Heart left ventricle (tissue), 16 donors: ENCODE measurements at regions of chr16 and their contacts with region 1.

Region 1: DNA sequence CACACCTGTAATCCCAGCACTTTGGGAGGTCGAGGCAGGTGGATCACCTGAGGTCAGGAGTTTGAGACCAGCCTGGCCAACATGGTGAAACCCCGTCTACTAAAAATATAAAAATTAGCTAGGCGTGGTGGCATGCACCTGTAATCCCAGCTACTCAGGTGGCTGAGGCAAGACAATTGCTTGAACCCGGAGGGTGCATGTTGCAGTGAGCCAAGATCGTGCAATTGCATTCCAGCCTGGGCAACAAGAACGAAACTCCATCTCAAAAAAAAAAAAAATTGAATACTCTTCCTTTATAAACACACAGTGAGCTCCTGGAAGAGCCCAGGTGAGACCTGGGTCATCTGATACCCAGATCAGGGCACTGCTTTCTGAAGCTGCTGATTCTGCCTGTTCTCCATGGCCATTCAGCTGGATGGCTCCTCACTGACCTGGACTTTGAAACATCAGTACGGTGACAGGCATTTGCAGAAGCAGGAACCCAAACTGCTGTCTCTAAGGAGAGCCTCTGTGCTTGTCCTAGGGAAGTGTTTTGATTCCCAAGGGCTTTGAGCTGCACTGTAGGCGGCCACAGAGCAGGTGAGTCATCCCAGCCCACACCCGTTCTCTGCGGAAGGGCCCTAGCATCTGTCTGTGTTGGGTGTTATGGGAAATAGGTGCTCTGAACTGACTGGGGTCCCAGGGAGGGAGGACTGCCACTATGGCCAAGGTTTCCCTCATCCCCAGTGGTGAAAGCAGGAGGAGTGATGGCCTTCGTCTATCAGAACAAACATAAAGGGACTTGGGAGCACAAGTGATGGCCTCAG is 60.6 kb upstream of the ADCY9 start:
- DNase-seq: no peak
- ATAC-seq: no peak
- H3K4me3 ChIP-seq: no peak overlapping the region
- H3K27ac ChIP-seq: no peak overlapping the region
- H3K4me1 ChIP-seq: no peaks in the 10 kb centered on the region
- H3K27me3 ChIP-seq: peaks cover 0 to 4% (median 0%) of the 10 kb centered on the region in 9 donors
- CTCF ChIP-seq: no peak
- POLR2A ChIP-seq: no peak

Region 2: GRCh38 chr16:3945751-3946603 is 230.8 kb before region 1 on chr16:
- intact Hi-C with region 1: loop called in 1 of 10 experiments (anchors 10 kb)
- DNase-seq: peak in 2 of 5 donors; percentile 54 to 64
- ATAC-seq: no peak
- H3K4me3 ChIP-seq: no peak overlapping the region
- H3K27ac ChIP-seq: peak overlapping the region in 2 of 12 donors; percentile 12 to 36
- H3K4me1 ChIP-seq: peaks cover 4 to 34% (median 23%) of the 10 kb centered on the region in 12 donors
- H3K27me3 ChIP-seq: no peaks in the 10 kb centered on the region
- CTCF ChIP-seq: no peak
- POLR2A ChIP-seq: no peak

Region 3: GRCh38 chr16:4067262-4068001 is 109.4 kb before region 1 on chr16:
- intact Hi-C with region 1: no loop called
- DNase-seq: no peak
- ATAC-seq: peak in 3 of 4 donors; percentile 22 to 57 (median 24)
- H3K4me3 ChIP-seq: no peak overlapping the region
- H3K27ac ChIP-seq: no peak overlapping the region
- H3K4me1 ChIP-seq: peaks cover 0 to 11% (median 1%) of the 10 kb centered on the region in 12 donors
- H3K27me3 ChIP-seq: no peaks in the 10 kb centered on the region
- CTCF ChIP-seq: no peak
- POLR2A ChIP-seq: no peak

Region 4: GRCh38 chr16:4626396-4626795 is 449.6 kb after region 1 on chr16:
- intact Hi-C with region 1: no loop called
- DNase-seq: no peak
- ATAC-seq: no peak
- H3K4me3 ChIP-seq: peak overlapping the region in 10 of 12 donors; percentile 75 to 100 (median 99)
- H3K27ac ChIP-seq: peak overlapping the region in 4 of 12 donors; percentile 29 to 99 (median 95)
- H3K4me1 ChIP-seq: peaks cover 0 to 28% (median 16%) of the 10 kb centered on the region in 12 donors
- H3K27me3 ChIP-seq: no peaks in the 10 kb centered on the region
- CTCF ChIP-seq: no peak
- POLR2A ChIP-seq: no peak